ENCODE measurements at regions of chr17 and their contacts with region 1.

Region 1: GRCh38 chr17:74770498-74771318 is 5.4 kb downstream of the NAT9 start:
- DNase-seq: peak; percentile 51 to 72 (median 66)
- H3K4me3 ChIP-seq: no peak overlapping the region
- H3K27ac ChIP-seq: no peak overlapping the region
- H3K4me1 ChIP-seq: peaks cover 4 to 16% (median 8%) of the 10 kb centered on the region in 4 experiments
- H3K27me3 ChIP-seq: no peaks in the 10 kb centered on the region

Region 2: DNA sequence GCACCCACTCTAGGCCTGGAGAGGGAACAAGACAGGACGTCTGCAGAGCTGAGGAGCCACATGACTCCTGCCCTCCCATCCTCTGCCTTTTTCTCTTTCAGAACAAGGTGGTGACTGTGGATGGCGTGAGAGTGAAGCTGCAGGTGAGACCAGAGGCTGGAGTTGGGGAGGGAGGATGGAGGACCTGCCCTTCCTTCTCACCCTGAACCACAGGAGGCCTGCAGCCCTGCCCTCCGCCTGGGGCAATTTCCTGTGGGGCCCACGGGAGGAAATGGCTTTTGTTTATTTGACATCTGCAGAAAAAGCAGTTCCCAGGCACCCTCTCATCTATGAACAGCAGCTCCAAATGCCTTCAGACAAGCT is 28.6 kb before region 1 on chr17:
- CTCF ChIA-PET with region 1: interaction called, 154 read pairs
- POLR2A ChIA-PET with region 1: interaction called, 13 read pairs
- DNase-seq: peak; percentile 64 to 89 (median 82)
- H3K4me3 ChIP-seq: peak overlapping the region in 2 of 7 experiments; percentile 26 to 40
- H3K27ac ChIP-seq: peak overlapping the region in 1 of 2 experiments; percentile 74
- H3K4me1 ChIP-seq: peaks cover 18 to 98% (median 91%) of the 10 kb centered on the region in 4 experiments
- H3K27me3 ChIP-seq: no peaks in the 10 kb centered on the region

Region 3: DNA sequence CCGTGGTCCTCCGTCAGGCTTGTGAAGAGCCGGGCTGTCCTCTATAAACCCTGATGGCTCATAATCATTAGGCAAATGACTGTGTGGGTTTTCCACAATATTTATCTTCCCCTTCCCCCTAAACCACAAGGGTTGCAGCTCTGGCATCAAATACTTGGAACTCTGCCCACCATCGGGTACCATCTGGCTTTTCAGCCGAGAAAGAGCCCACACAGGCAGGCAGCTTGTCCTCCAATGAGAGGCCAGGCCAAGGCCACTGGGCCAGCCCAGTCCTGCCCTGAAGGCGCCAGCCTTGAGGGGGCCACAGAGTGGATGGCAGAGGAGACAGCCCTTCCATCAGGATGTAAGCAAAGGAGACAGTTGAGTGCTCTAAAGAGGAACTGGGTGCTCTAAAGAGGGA is 37.2 kb after region 1 on chr17:
- CTCF ChIA-PET with region 1: no interaction called
- POLR2A ChIA-PET with region 1: no interaction called
- DNase-seq: peak; percentile 33 to 70 (median 69)
- H3K4me3 ChIP-seq: no peak overlapping the region
- H3K27ac ChIP-seq: no peak overlapping the region
- H3K4me1 ChIP-seq: peaks cover 0 to 22% (median 16%) of the 10 kb centered on the region in 4 experiments
- H3K27me3 ChIP-seq: peaks cover 0 to 7% (median 3%) of the 10 kb centered on the region in 5 experiments